Calu3 (cell line): ENCODE measurements at regions of chr12 and their contacts with region 1.

Region 1: GRCh38 chr12:76559400-76560085 is at the start of gene OSBPL8:
- DNase-seq: peak; percentile 97
- H3K4me3 Mint-ChIP-seq: peak within 1 kb of the TSS; percentile 90
- H3K27ac Mint-ChIP-seq: peak within 1 kb of the TSS; percentile 92
- H3K4me1 Mint-ChIP-seq: peaks cover 23% of the 10 kb centered on the region
- H3K27me3 Mint-ChIP-seq: no peaks in the 10 kb centered on the region
- CTCF ChIP-seq: no peak
- total RNA-seq, gene OSBPL8: 62.0 and 64.9 TPM in 2 replicates

Region 2: DNA sequence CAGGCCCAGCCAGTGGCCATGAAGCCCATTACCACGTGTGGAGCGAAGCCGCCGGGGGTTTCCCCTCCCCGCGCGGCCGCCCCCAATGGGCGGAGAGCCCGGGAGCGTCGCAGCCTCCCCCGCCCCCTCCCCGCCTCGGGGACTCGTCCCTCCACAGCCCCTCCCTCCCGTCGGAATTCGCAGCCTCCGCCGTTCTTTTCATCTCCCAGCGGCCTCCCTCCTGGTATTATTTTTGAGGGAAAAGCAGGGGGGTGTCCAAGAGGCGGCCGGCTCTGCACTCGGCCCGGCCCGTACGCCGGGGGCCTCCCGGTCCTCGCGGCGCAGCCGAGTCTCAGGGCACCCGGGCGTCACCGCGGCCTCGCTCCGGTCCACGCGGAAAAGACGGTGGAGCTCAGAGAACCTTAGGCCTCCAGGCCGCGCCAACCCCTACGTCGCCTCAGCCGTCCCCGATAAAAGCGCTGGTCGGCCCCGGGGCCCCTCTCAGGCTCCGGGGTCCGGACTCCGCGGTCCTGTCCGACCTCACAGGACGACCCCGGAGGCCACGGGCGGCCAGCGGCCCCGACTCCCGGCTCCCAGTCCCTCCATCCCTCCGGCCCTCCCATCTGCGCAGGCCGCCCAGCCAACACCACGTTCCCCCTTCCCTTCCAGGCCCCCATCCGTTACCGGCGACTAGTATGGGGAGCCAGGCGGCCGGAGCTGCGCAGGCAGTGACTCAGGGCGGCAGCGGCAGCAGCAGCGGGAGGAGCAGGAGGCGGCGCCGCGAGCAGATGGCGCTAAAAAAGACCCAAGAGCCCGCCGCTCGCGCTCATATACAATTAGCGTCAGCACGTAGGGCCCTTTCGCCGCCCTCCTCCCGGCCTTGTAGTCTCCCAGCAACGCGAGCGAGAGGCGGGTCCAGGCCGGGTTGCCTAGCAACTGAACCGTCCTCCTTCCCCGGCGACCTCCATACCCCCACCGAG is 475.4 kb before region 1 on chr12 and contains the start of gene NAP1L1:
- CTCF ChIA-PET with region 1: no interaction called
- intact Hi-C with region 1: loop called (anchors 10 kb)
- DNase-seq: peak; percentile 98
- H3K4me3 Mint-ChIP-seq: peak within 1 kb of the TSS; percentile 99
- H3K27ac Mint-ChIP-seq: peak within 1 kb of the TSS; percentile 97
- H3K4me1 Mint-ChIP-seq: peaks cover 31% of the 10 kb centered on the region
- H3K27me3 Mint-ChIP-seq: no peaks in the 10 kb centered on the region
- CTCF ChIP-seq: no peak
- total RNA-seq, gene NAP1L1: 394 and 467 TPM in 2 replicates

Region 3: GRCh38 chr12:76337583-76337982 is 222.0 kb before region 1 on chr12:
- CTCF ChIA-PET with region 1: no interaction called
- intact Hi-C with region 1: no loop called
- DNase-seq: no peak
- H3K4me3 Mint-ChIP-seq: no peak overlapping the region
- H3K27ac Mint-ChIP-seq: no peak overlapping the region
- H3K4me1 Mint-ChIP-seq: peaks cover 53% of the 10 kb centered on the region
- H3K27me3 Mint-ChIP-seq: no peaks in the 10 kb centered on the region
- CTCF ChIP-seq: no peak

Region 4: GRCh38 chr12:76374386-76375020 is 185.0 kb before region 1 on chr12:
- CTCF ChIA-PET with region 1: no interaction called
- intact Hi-C with region 1: loop called (anchors 10 kb)
- DNase-seq: peak; percentile 9
- H3K4me3 Mint-ChIP-seq: no peak overlapping the region
- H3K27ac Mint-ChIP-seq: peak overlapping the region; percentile 64
- H3K4me1 Mint-ChIP-seq: peaks cover 25% of the 10 kb centered on the region
- H3K27me3 Mint-ChIP-seq: no peaks in the 10 kb centered on the region
- CTCF ChIP-seq: no peak

Region 5: GRCh38 chr12:76820888-76821482 is 261.4 kb after region 1 on chr12:
- CTCF ChIA-PET with region 1: no interaction called
- intact Hi-C with region 1: no loop called
- DNase-seq: peak; percentile 50
- H3K4me3 Mint-ChIP-seq: no peak overlapping the region
- H3K27ac Mint-ChIP-seq: no peak overlapping the region
- H3K4me1 Mint-ChIP-seq: no peaks in the 10 kb centered on the region
- H3K27me3 Mint-ChIP-seq: no peaks in the 10 kb centered on the region
- CTCF ChIP-seq: peak; percentile 50